ENCODE measurements at regions of chr15 and their contacts with region 1.

Region 1: GRCh38 chr15:58182460-58183163 is 44.4 kb downstream of the AQP9 start:
- DNase-seq: no peak
- ATAC-seq: peak; percentile 88

Region 2: DNA sequence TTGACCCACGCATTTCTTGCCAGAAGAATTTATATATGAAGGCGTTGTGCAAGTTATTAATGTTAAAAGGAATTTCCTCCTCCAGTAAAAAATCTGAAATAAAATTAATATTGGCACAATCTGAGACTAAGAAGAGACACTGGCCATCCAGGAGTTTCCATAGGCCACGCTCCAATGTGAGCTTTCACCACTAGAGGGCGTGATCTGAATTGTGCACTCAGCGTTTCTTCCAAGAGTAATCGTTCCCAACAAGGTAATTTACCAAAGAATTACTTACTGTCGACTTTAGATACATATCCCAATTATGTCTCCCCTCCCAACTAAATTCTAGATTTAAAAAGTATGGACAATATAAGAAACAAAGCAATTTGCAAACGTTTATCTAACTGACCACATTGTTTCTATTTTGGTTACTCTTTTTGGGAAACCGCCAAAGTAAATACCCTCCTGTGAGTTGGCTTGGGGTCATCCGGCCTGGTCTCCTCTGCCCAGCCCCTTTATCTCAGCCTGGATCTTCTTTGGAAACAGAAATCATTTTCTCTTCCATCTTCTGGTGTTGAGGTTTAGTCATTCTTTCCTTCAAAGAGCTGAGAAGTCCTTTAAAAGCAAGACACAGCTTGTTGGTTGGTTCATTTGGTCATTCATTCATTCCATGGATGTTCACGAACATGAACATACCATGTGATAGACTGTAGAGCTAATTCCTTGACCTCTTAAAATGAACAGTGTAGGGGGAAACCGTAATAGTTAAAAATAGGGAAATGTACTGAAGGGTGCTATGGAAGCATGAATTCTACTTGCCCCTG is 449.9 kb before region 1 on chr15:
- intact Hi-C with region 1: loop called (anchors 5 kb)
- DNase-seq: no peak
- ATAC-seq: no peak

Region 3: DNA sequence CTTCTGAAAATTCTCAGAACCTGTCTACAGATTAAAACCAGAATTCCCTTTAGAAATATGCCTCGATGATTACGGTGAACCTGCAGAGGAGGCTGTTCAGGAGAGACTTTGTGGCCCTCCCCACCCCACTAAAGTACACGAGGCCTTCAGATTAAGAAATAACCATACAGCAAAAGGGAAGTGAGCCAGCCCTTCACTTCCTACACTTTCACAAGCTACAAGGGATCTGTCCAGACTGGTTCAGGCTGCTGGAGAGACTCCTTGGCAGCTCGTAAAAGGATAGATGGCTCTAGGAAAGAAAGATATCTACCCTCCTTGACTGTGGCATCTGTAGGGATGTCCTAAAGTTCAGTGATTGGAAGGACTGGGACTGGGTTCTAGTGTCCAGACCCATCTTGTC is 219.7 kb before region 1 on chr15:
- intact Hi-C with region 1: no loop called
- DNase-seq: no peak
- ATAC-seq: no peak

Region 4: GRCh38 chr15:58077427-58077826 is 105.2 kb before region 1 on chr15:
- intact Hi-C with region 1: loop called (anchors 5 kb)
- DNase-seq: no peak
- ATAC-seq: peak; percentile 28

Region 5: GRCh38 chr15:58115692-58116091 is 66.9 kb before region 1 on chr15:
- intact Hi-C with region 1: loop called (anchors 1 kb)
- DNase-seq: no peak
- ATAC-seq: no peak

Measured in Right ventricle myocardium inferior (tissue), 1 donor.